AG04449 (cell line): ENCODE measurements at regions of chr11 and their contacts with region 1.

Region 1: DNA sequence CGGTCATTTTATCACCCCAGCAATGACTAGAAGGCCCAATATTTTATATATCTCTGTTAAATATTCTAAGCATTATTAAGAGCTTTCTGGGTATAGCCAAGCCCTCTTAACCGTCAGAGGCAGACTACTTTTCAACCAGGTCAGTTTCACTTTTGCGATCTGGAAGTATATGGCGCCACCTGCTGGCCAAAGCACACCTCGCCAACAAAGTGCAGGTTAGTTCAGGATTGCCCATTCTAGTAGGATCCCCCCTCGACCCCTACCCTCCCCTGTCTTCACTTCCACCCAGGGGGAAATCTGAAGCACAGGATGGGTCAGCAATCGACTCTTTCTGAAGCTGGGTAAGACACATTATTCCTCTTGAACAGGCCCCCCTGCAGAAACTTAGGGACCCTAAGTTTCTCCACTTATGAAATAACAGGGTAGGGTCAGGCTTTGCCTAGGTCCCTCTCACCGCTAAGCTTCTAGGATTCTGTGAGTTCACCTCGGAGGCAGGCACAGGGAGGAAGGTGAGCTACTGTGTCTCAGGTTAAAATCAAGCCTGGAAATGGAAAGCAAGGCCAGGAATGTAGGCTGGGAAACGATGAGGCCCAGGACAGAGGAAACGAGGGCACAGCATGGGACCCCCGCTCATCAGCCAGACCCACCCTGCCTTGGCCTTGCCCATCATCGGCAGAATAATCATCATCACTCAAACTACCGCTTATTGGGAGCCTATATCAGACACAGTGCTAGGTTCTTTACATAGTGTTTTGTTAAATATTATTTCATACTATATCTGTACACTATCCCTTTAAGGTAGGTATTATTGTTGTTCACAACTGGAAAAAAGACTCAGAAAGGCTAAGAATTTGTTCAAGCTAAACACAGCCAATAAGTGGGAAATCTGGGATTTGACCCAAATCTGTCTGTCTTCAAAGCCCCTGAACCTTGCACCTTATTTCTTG is 35.6 kb downstream of the KCNJ1 start:
- DNase-seq: peak; percentile 42
- H3K4me3 ChIP-seq: no peak overlapping the region
- CTCF ChIP-seq: peak; percentile 82

Region 2: GRCh38 chr11:128522055-128522942 is 309.1 kb before region 1 on chr11:
- CTCF ChIA-PET with region 1: interaction called, 26 read pairs
- POLR2A ChIA-PET with region 1: no interaction called
- DNase-seq: peak; percentile 97
- H3K4me3 ChIP-seq: peak overlapping the region; percentile 82
- CTCF ChIP-seq: no peak

Region 3: DNA sequence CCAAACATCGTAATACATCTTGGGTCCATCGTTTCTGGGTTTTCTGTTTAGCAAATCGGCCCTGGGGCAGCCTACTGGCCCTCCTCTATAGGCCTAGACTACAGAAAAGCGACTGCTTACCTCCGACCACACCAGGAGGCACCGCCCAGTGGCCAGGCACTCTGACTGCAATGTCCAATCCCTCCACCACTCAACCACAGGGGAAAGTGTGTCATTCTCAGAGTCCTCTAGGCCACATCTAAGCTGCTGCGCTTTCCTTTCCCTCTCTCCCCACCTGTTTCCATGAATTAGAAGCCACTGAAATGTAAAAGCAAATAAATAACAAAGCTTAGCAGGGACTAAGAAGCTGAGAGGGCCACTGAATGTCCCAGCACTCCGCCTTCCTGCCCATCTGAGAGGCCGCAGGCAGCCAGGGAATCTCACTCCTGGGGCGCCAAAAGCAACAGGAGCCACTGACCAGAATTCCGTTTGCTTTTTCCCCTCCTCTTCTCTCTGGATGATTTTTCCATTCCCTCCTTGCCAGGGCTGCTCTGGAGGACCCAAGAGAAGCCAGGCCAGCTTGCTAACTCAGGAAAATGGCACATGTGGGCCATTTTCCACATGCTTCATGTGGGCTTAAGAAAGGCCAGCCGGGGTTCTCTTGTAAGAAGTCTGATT is 187.7 kb before region 1 on chr11:
- CTCF ChIA-PET with region 1: interaction called, 23 read pairs
- POLR2A ChIA-PET with region 1: no interaction called
- DNase-seq: no peak
- H3K4me3 ChIP-seq: no peak overlapping the region
- CTCF ChIP-seq: no peak

Region 4: GRCh38 chr11:128686745-128687177 is 144.7 kb before region 1 on chr11:
- CTCF ChIA-PET with region 1: interaction called, 24 read pairs
- POLR2A ChIA-PET with region 1: no interaction called
- DNase-seq: no peak
- H3K4me3 ChIP-seq: peak overlapping the region; percentile 52
- CTCF ChIP-seq: no peak

Region 5: GRCh38 chr11:128809128-128809527 is 22.3 kb before region 1 on chr11:
- CTCF ChIA-PET with region 1: interaction called, 11 read pairs
- POLR2A ChIA-PET with region 1: no interaction called
- DNase-seq: no peak
- H3K4me3 ChIP-seq: no peak overlapping the region
- CTCF ChIP-seq: no peak

Region 6: DNA sequence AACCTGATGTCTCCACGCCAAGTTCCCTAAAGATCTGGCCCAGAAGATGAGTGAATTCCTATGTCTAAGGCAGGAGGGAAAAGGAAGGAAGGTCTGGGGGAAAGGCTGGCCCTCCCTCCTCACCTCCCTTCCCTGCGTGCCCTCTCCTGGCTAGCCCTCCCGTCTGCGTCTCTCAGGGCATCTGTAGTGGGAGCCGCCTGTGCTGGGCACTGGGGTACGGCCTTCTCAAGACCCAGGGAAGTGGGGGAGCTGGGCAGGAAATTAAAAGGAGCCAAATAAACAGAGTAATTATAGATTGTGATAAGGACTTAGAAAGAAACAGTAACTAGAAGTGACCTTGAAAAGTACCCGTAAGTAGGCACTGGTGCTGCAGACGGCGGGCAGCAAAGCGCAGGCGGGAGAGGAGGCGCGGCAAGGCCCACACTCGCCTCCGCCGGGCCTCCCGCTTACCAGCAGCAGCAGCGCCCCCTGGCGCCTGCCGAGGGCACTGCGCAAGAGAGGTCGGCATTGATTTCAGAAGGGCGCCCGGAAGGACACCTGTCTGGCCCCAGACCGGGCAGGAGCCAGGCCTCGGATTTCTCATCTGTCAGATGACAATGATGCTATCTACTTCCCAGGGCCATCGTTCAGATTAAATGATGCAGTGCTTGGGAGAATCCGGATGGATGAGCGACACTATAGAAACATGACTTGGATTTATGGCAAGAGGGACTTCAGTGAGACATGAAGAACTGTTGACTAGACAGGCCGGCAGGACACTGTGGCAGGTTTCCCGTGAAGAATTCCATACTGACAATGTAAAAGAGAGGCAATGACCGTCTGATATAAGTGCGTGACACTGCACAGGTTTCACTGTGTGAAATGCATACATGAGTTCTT is 28.4 kb after region 1 on chr11:
- CTCF ChIA-PET with region 1: interaction called, 16 read pairs
- POLR2A ChIA-PET with region 1: no interaction called
- DNase-seq: no peak
- H3K4me3 ChIP-seq: no peak overlapping the region
- CTCF ChIP-seq: peak; percentile 73